PC-9 (cell line): ENCODE measurements at regions of chr12 and their contacts with region 1.

Region 1: DNA sequence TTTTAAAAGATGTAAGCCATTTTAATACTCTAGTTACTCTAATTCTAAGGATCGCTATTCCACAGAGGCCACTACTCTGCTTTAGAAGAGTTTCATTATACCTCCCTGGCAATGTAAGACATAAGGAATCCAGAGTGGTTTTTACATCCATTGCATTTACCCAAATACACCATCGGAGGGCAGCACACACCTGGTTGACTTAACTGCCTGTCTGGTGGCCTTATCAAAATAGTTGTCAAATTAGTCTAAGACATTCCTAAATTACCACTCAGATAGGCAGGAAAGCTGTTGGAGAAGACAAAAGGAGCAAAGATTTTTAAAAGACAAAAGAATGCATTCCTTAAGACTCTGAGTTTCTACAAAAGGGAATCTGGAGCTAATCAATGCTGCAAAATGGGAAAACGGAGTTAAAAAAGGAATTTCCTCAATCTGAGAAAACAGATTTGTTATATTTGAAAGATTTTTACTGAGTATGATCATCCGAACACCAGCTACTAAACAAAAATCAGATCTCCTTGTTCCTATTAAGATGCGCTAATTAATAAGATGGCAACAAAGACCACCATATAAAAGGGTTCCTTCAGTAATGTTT is 33.8 kb upstream of the FGD4 start:
- DNase-seq: peak; percentile 70 to 72
- H3K4me3 ChIP-seq: no peak overlapping the region
- H3K27ac ChIP-seq: no peak overlapping the region
- H3K4me1 ChIP-seq: no peaks in the 10 kb centered on the region
- H3K27me3 ChIP-seq: no peaks in the 10 kb centered on the region
- CTCF ChIP-seq: peak; percentile 94

Region 2: GRCh38 chr12:31245822-31246469 is 1119.6 kb before region 1 on chr12:
- CTCF ChIA-PET with region 1: no interaction called
- POLR2A ChIA-PET with region 1: no interaction called
- intact Hi-C with region 1: loop called (anchors 10 kb)
- DNase-seq: peak in 1 of 2 experiments; percentile 33
- H3K4me3 ChIP-seq: no peak overlapping the region
- H3K27ac ChIP-seq: no peak overlapping the region
- H3K4me1 ChIP-seq: no peaks in the 10 kb centered on the region
- H3K27me3 ChIP-seq: no peaks in the 10 kb centered on the region
- CTCF ChIP-seq: no peak

Region 3: GRCh38 chr12:32455607-32456071 is 90.1 kb after region 1 on chr12:
- CTCF ChIA-PET with region 1: interaction called, 4 read pairs
- POLR2A ChIA-PET with region 1: no interaction called
- intact Hi-C with region 1: loop called (anchors 2 kb)
- DNase-seq: peak; percentile 22 to 69
- H3K4me3 ChIP-seq: no peak overlapping the region
- H3K27ac ChIP-seq: no peak overlapping the region
- H3K4me1 ChIP-seq: peaks cover 34% of the 10 kb centered on the region
- H3K27me3 ChIP-seq: no peaks in the 10 kb centered on the region
- CTCF ChIP-seq: peak; percentile 83

Region 4: GRCh38 chr12:32659908-32660440 is 294.4 kb after region 1 on chr12:
- CTCF ChIA-PET with region 1: interaction called, 10 read pairs
- POLR2A ChIA-PET with region 1: no interaction called
- intact Hi-C with region 1: loop called (anchors 1 kb)
- DNase-seq: no peak
- H3K4me3 ChIP-seq: no peak overlapping the region
- H3K27ac ChIP-seq: no peak overlapping the region
- H3K4me1 ChIP-seq: no peaks in the 10 kb centered on the region
- H3K27me3 ChIP-seq: no peaks in the 10 kb centered on the region
- CTCF ChIP-seq: no peak

Region 5: DNA sequence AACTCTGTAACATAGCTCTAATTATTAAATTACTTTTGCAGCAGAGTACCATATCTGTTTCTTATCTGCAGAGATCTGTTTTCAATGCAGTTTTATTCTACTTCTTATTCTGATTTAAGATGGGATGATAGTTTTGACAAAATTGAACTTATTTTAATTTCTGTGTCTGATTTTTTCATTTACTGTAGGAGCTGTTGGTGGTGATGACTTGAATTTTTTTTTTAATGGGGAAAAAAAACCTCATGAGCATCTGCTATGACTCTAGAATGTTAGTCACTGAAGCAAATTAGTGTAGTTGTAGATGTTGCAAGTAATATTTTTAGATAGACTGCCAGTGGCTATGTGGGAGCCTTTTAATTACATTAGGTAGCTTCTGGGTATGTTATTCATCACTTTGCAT is 336.9 kb after region 1 on chr12:
- CTCF ChIA-PET with region 1: interaction called, 3 read pairs
- POLR2A ChIA-PET with region 1: interaction called, 12 read pairs
- intact Hi-C with region 1: no loop called
- DNase-seq: no peak
- H3K4me3 ChIP-seq: no peak overlapping the region
- H3K27ac ChIP-seq: no peak overlapping the region
- H3K4me1 ChIP-seq: no peaks in the 10 kb centered on the region
- H3K27me3 ChIP-seq: no peaks in the 10 kb centered on the region
- CTCF ChIP-seq: no peak

Region 6: GRCh38 chr12:34022079-34022830 is 1656.7 kb after region 1 on chr12 and contains the start of gene ALG10:
- CTCF ChIA-PET with region 1: no interaction called
- POLR2A ChIA-PET with region 1: no interaction called
- intact Hi-C with region 1: loop called (anchors 5 kb)
- DNase-seq: peak; percentile 93 to 99
- H3K4me3 ChIP-seq: peak within 1 kb of the TSS; percentile 76
- H3K27ac ChIP-seq: peak within 1 kb of the TSS; percentile 49
- H3K4me1 ChIP-seq: peaks cover 19% of the 10 kb centered on the region
- H3K27me3 ChIP-seq: no peaks in the 10 kb centered on the region
- CTCF ChIP-seq: peak; percentile 86
- total RNA-seq, gene ALG10: 21.5 and 23.3 TPM in 2 replicates